Activated T-helper 2 cell treated with anti-CD3 and anti-CD28 coated beads, Interferon-gamma antibody, Interleukin-2, Interleukin-4, amounts not matched to agents 10 μg/mL and 5 μg/mL and 100 μg/mL, durations not matched to agents 14 hours and 24 hours and 36 hours (primary cell): ENCODE measurements at regions of chr1 and their contacts with region 1.

Region 1: DNA sequence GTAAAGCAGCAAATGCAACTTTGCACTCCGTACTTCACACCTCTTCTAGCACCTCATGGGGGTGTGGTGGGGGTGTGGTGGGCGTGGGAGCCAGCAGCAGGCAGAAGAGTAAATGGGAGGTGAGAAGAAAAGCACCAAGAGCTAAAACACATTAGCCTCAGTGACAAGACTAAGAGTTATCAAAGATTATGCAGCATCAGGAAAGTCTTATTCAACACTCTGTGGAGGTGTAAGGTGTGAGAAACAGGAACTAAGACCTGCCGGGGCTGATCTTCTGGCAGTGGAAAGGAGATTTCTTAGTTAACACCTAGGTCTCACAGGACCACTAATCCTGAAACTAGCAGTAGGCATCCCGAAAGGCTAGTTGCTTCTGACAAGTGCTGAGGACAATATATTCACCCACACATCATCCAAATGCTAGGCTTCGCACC is 9.9 kb downstream of the TGFBR3 start:
- DNase-seq: no peak
- H3K4me3 Mint-ChIP-seq: no peak overlapping the region
- H3K27ac Mint-ChIP-seq: peak overlapping the region; percentile 32
- H3K4me1 Mint-ChIP-seq: peaks cover 69% of the 10 kb centered on the region
- H3K27me3 Mint-ChIP-seq: peaks cover 2% of the 10 kb centered on the region

Region 2: DNA sequence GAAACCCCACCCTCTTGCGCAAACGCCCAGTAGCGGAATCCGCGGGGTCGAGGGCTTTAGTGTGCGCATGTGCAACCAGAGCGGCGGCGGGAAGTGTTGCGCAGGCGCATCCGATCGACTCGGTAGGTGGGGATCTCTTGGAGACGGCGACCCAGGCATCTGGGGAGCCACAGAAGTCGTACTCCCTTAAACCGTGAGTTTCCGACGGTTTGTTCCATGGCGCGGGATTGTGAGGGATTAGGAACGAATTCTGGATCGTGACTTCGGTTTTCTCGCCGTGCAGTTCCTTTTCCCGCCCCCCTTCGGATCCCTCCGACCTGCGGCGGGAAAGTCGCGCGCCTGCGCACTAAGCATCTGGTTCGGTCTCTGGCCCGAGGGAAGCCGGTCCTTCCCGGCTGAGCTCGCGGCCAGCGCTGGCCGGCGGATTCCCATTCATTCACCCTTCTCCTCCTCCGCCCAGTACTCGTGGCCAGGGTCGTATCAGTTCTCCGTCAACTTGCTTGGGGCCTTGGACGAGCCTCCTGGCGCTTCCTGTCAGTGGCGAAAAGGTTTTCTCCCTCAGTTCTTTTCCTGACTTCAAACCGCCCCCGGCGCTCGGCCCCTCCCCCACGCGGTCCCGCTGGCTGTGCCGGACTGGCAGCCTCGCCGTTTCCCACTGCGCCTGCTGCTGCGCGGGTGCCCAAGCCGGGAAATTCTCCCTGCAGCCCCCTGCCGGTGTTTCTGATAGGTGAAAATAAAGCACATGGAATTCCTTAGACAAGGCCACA is 375.1 kb before region 1 on chr1 and contains the start of gene CDC7:
- intact Hi-C with region 1: loop called (anchors 5 kb)
- DNase-seq: peak; percentile 84
- H3K4me3 Mint-ChIP-seq: no peak within 1 kb of the TSS
- H3K27ac Mint-ChIP-seq: no peak within 1 kb of the TSS
- H3K4me1 Mint-ChIP-seq: peaks cover 29% of the 10 kb centered on the region
- H3K27me3 Mint-ChIP-seq: no peaks in the 10 kb centered on the region
- total RNA-seq, gene CDC7: 27.4 and 28.8 TPM in 2 replicates

Region 3: GRCh38 chr1:91555821-91556531 is 320.1 kb before region 1 on chr1:
- intact Hi-C with region 1: loop called (anchors 1 kb)
- DNase-seq: peak; percentile 77
- H3K4me3 Mint-ChIP-seq: peak overlapping the region; percentile 53
- H3K27ac Mint-ChIP-seq: peak overlapping the region; percentile 93
- H3K4me1 Mint-ChIP-seq: peaks cover 86% of the 10 kb centered on the region
- H3K27me3 Mint-ChIP-seq: no peaks in the 10 kb centered on the region

Region 4: GRCh38 chr1:91712981-91713841 is 162.8 kb before region 1 on chr1:
- intact Hi-C with region 1: loop called (anchors 1 kb)
- DNase-seq: peak; percentile 26
- H3K4me3 Mint-ChIP-seq: peak overlapping the region; percentile 60
- H3K27ac Mint-ChIP-seq: peak overlapping the region; percentile 89
- H3K4me1 Mint-ChIP-seq: peaks cover 64% of the 10 kb centered on the region
- H3K27me3 Mint-ChIP-seq: no peaks in the 10 kb centered on the region

Region 5: DNA sequence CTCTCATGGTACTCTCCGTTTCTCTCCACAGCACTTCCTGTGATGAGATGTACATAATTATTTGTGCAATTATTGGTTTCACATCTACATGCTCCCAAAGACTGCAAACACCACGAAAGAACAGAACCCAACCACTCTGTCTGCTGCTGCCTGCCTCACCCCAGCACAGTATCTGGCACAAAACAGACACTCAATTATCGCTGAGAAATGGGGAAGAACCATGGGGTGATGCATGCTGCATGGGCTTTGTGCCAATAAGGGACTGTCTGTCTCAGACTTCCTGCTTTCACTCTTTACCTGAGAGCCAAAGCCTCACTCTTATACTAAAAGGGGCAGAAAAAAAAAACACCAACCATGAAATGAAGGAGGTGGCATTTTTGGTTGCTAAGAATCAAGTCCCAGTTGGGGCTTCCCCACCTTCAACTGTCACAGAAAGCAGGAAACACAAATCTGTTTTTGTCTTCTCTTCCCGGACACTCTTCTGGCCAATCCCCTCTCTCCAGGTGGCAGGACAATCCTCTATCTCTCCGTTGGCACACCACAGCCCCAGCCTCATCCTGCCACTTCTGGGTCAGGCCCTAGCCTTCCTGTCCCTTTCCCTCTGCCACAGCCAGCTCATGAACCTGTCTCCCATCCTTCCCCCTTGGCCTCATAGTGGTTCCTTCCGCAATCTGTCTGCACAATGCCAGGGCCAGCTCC is 72.1 kb before region 1 on chr1:
- intact Hi-C with region 1: loop called (anchors 1 kb)
- DNase-seq: peak; percentile 66
- H3K4me3 Mint-ChIP-seq: peak overlapping the region; percentile 74
- H3K27ac Mint-ChIP-seq: peak overlapping the region; percentile 93
- H3K4me1 Mint-ChIP-seq: peaks cover 52% of the 10 kb centered on the region
- H3K27me3 Mint-ChIP-seq: peaks cover 8% of the 10 kb centered on the region